PC-3 (cell line): ENCODE measurements at regions of chr13 and their contacts with region 1.

Region 1: GRCh38 chr13:21014502-21015170 is 46.8 kb downstream of the LATS2 start:
- DNase-seq: peak; percentile 74
- ATAC-seq: peak; percentile 53
- H3K4me3 ChIP-seq: peak overlapping the region; percentile 43
- H3K27ac ChIP-seq: peak overlapping the region; percentile 97
- H3K4me1 ChIP-seq: peaks cover 48% of the 10 kb centered on the region
- H3K27me3 ChIP-seq: no peaks in the 10 kb centered on the region
- CTCF ChIP-seq: no peak

Region 2: GRCh38 chr13:20565115-20565736 is 449.4 kb before region 1 on chr13:
- CTCF ChIA-PET with region 1: no interaction called
- POLR2A ChIA-PET with region 1: no interaction called
- intact Hi-C with region 1: no loop called
- DNase-seq: peak; percentile 40
- ATAC-seq: no peak
- H3K4me3 ChIP-seq: no peak overlapping the region
- H3K27ac ChIP-seq: no peak overlapping the region
- H3K4me1 ChIP-seq: peaks cover 13% of the 10 kb centered on the region
- H3K27me3 ChIP-seq: no peaks in the 10 kb centered on the region
- CTCF ChIP-seq: no peak

Region 3: DNA sequence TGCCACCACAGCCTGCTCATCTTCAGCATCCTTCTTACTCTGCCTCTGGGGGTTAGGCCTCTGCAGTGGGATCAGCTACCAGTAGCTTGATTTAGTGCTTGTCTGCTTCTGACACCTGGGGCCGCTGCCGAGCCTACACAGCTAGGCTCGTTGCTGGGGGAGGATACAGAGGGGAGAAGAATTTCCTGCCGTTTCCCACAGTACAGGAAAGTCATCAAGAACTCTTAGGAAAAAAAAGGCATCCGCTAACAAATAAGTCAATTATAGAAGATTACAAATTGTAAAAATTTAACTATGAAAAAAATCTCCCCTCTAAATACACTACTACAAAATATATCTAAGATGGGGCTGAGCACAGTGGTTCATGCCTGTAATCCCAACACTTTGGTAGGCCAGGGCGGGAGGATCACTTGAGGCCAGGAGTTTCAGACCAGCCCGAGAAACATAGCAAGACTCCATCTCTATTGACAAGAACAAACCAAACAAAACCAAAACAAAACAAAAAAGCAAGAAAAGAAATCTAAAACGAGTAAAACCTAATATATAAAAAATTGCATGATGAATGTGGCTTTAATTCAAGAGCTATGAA is 20.1 kb after region 1 on chr13:
- CTCF ChIA-PET with region 1: no interaction called
- POLR2A ChIA-PET with region 1: no interaction called
- intact Hi-C with region 1: loop called (anchors 1 kb)
- DNase-seq: peak; percentile 36
- ATAC-seq: peak; percentile 17
- H3K4me3 ChIP-seq: 0 out of 2 replicates have a peak overlapping the region, but pooled peaks have one; percentile 13
- H3K27ac ChIP-seq: peak overlapping the region; percentile 99
- H3K4me1 ChIP-seq: peaks cover 31% of the 10 kb centered on the region
- H3K27me3 ChIP-seq: no peaks in the 10 kb centered on the region
- CTCF ChIP-seq: peak; percentile 52

Region 4: DNA sequence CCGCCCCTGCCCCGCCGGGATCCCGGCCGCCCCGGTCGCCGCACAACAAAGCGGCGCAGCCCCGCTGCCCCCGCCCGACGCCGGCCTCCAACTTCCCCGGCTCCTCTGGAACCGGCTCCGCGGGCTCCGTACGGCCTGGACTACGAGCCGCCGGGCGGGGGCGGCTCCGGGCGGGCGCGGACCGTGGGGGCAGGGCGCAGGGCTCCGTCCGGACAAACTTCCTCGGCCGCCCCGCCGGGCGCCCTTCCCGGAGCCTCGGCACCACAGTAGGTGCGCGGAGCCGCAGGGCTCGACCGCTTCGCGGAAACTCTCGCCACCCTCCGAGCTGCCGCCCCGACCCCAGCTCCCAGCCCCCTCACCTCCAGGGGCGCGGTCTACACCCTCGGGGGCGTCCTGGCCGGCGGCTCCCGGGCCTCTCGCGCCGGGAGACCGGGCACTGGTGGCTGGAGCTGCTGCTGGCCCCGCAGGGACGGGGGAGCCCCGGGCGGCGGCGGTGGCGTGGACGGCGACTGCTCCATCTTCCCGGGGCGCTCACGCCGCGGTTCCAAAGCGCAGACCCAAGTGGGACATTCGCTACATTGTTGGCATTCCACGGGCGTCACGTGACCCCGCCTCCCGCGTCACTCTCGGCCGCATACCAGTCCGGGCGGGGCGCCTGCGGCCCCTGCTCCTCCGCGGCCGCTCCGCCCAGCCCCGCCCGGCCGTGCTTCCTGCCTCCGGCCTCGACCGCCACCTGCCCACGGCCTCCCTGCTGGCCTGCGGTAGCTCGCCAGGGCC is 46.5 kb after region 1 on chr13 and contains the start of gene LATS2:
- CTCF ChIA-PET with region 1: no interaction called
- POLR2A ChIA-PET with region 1: no interaction called
- intact Hi-C with region 1: loop called (anchors 2 kb)
- DNase-seq: peak; percentile 94
- ATAC-seq: peak; percentile 83
- H3K4me3 ChIP-seq: peak within 1 kb of the TSS; percentile 96
- H3K27ac ChIP-seq: peak within 1 kb of the TSS; percentile 75
- H3K4me1 ChIP-seq: peaks cover 18% of the 10 kb centered on the region
- H3K27me3 ChIP-seq: no peaks in the 10 kb centered on the region
- CTCF ChIP-seq: no peak
- total RNA-seq, gene LATS2: 11.0 and 11.1 TPM in 2 replicates

Region 5: DNA sequence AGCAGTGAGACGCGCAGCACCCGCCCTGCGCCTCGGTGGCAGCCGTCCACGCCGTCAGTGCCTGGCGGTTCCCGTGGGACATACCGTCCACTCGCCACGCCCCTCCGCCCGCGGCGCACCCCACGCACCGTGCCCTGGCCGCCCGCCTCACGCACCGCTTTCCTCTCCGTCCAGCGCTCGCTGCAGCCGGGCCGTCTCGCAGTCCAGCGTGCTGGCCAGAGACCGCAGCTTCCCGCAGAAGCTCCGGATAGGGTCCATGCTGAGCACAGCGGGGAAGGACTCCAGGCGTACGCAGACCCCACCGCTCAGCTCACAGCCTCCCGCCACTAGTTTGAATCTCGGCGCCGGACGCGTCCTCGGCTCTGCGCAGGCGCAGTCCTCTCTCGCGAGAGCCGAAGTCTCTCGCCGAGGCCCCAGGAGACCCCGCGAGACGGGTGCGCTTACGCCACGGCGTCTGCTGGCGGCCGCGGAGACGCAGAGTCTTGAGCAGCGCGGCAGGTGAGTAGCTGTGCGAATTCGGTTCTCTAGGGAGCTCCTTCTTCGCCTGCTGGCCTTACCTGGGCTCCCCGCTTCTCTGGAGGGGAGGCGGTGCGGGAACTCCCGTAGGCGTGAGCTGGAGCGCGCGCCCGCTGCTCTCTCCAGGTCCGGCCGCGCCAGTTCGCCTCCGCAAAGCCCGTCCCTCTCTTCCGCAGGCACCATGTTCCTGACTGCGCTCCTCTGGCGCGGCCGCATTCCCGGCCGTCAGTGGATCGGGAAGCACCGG is 161.8 kb after region 1 on chr13 and contains the starts of genes MRPL57 and SKA3:
- CTCF ChIA-PET with region 1: no interaction called
- POLR2A ChIA-PET with region 1: interaction called, 3 read pairs
- intact Hi-C with region 1: loop called (anchors 1 kb)
- DNase-seq: peak; percentile 96
- ATAC-seq: peak; percentile 87
- H3K4me3 ChIP-seq: peak within 1 kb of the TSS; percentile 92
- H3K27ac ChIP-seq: peak within 1 kb of the TSS; percentile 81
- H3K4me1 ChIP-seq: peaks cover 17% of the 10 kb centered on the region; the same call in 1 of the 2 replicates
- H3K27me3 ChIP-seq: no peaks in the 10 kb centered on the region
- CTCF ChIP-seq: no peak
- total RNA-seq, gene MRPL57: 56.4 and 92.3 TPM in 2 replicates
- total RNA-seq, gene SKA3: 29.0 and 32.4 TPM in 2 replicates

Region 6: GRCh38 chr13:21348488-21349120 is 334.0 kb after region 1 on chr13:
- CTCF ChIA-PET with region 1: no interaction called
- POLR2A ChIA-PET with region 1: no interaction called
- intact Hi-C with region 1: no loop called
- DNase-seq: no peak
- ATAC-seq: no peak
- H3K4me3 ChIP-seq: no peak overlapping the region
- H3K27ac ChIP-seq: no peak overlapping the region
- H3K4me1 ChIP-seq: no peaks in the 10 kb centered on the region
- H3K27me3 ChIP-seq: no peaks in the 10 kb centered on the region
- CTCF ChIP-seq: no peak

Region 7: GRCh38 chr13:21817878-21818277 is 803.2 kb after region 1 on chr13:
- CTCF ChIA-PET with region 1: no interaction called
- POLR2A ChIA-PET with region 1: no interaction called
- intact Hi-C with region 1: no loop called
- DNase-seq: no peak
- ATAC-seq: no peak
- H3K4me3 ChIP-seq: no peak overlapping the region
- H3K27ac ChIP-seq: no peak overlapping the region
- H3K4me1 ChIP-seq: no peaks in the 10 kb centered on the region
- H3K27me3 ChIP-seq: peaks cover 52% of the 10 kb centered on the region
- CTCF ChIP-seq: no peak